Caco-2 (cell line): ENCODE measurements at regions of chrX and their contacts with region 1.

Region 1: DNA sequence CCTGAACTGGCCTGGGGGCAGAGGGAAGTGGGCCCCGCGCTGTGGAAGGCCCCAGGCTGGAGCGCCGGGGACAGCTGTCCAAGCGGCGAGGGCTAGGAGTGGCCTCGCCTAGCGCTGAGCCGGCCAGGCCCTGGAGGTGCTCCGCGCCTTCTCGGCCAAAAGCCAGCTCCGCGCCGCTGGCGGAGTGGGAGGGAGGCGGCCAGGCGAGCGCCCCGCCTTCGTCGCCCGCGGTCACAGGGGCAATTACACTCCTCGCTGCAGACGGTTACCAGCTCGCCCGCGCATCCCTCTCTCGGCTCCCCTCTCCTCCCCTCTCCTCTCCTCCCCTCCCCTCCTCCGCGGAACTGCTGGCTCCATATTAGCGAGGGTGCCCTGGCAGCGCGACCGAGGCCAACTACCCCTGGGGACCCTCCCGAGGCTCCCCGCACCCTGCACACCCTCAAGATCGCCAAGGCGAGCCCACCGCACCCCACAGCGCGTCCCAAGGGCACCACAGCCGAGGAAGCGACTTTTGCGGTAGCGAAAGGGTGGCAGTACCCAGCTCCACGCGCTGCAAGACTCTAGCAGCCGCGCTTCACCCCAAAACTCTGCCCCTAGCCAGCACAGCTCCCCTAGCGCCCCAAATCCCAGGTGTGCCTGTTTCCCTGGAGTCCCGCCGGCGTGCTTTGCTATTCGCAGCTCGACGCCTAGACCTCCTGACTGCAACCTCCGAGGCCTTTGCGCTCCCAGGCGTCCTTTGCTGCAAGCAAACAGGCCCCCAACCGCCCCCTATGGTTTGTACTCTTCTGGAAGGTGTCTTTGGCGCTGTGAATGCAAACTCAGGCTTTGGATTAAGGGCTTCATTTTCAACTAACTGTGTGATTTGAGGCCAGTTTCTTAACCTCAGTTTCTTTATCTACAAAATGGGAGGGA is 91.4 kb downstream of the BCOR start:
- DNase-seq: peak; percentile 72 to 74
- H3K4me3 ChIP-seq: peak overlapping the region; percentile 69
- H3K4me3 Mint-ChIP-seq: peak overlapping the region; percentile 82
- H3K27ac Mint-ChIP-seq: no peak overlapping the region
- H3K4me1 ChIP-seq: peaks cover 25% of the 10 kb centered on the region
- H3K4me1 Mint-ChIP-seq: peaks cover 14% of the 10 kb centered on the region
- H3K27me3 ChIP-seq: no peaks in the 10 kb centered on the region
- H3K27me3 Mint-ChIP-seq: no peaks in the 10 kb centered on the region
- CTCF ChIP-seq: peak in 1 of 2 experiments; percentile 23

Region 2: GRCh38 chrX:39652336-39653131 is 353.8 kb before region 1 on chrX:
- CTCF ChIA-PET with region 1: no interaction called
- POLR2A ChIA-PET with region 1: no interaction called
- intact Hi-C with region 1: loop called (anchors 10 kb)
- DNase-seq: peak; percentile 30 to 34
- H3K4me3 ChIP-seq: no peak overlapping the region
- H3K4me3 Mint-ChIP-seq: no peak overlapping the region
- H3K27ac Mint-ChIP-seq: no peak overlapping the region
- H3K4me1 ChIP-seq: no peaks in the 10 kb centered on the region
- H3K4me1 Mint-ChIP-seq: no peaks in the 10 kb centered on the region
- H3K27me3 ChIP-seq: no peaks in the 10 kb centered on the region
- H3K27me3 Mint-ChIP-seq: peaks cover 3% of the 10 kb centered on the region
- CTCF ChIP-seq: peak; percentile 30 to 49

Region 3: DNA sequence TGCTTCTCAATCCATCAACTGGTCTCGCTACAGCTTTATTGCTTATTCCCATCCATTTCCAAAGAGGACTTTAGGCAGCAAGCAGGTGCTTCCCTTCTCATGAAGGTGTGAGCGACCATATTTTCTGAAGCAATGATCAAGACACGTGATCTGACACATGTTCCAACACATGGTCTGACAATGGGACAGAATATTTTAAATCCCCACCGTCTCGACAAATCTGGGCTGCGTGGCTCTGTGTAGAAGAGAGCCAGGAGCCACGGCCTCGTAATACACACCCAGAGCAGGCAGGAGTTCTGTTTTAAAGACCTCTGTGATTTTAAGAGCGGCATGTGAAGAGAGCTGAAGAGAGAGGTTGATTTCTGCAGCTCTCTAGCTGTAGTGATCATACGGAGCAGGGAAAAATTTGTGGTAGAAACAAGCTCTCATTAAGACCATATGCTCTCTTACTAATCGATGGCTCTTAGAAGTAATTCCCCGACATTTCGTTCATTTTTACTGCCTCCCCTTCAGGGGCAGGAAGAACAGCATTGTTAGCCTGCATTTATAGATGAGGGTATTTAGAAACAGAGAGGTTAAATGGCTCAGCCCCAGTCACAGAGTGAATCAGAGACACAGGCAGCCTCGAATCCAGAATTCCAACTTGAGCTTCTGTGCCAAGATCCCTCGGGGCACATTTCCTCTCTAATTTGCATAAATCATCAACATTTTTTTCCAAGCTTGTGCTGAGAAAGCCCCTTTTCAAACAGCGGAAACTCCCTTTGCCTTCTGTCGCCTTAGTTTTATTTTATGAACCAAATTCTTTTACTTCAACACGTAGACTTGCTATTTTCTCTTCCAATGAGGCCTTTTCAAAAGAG is 182.4 kb after region 1 on chrX:
- CTCF ChIA-PET with region 1: no interaction called
- POLR2A ChIA-PET with region 1: no interaction called
- intact Hi-C with region 1: no loop called
- DNase-seq: no peak
- H3K4me3 ChIP-seq: no peak overlapping the region
- H3K4me3 Mint-ChIP-seq: no peak overlapping the region
- H3K27ac Mint-ChIP-seq: no peak overlapping the region
- H3K4me1 ChIP-seq: no peaks in the 10 kb centered on the region
- H3K4me1 Mint-ChIP-seq: no peaks in the 10 kb centered on the region
- H3K27me3 ChIP-seq: no peaks in the 10 kb centered on the region
- H3K27me3 Mint-ChIP-seq: no peaks in the 10 kb centered on the region
- CTCF ChIP-seq: no peak